ENCODE measurements at regions of chr3 and their contacts with region 1.

Region 1: DNA sequence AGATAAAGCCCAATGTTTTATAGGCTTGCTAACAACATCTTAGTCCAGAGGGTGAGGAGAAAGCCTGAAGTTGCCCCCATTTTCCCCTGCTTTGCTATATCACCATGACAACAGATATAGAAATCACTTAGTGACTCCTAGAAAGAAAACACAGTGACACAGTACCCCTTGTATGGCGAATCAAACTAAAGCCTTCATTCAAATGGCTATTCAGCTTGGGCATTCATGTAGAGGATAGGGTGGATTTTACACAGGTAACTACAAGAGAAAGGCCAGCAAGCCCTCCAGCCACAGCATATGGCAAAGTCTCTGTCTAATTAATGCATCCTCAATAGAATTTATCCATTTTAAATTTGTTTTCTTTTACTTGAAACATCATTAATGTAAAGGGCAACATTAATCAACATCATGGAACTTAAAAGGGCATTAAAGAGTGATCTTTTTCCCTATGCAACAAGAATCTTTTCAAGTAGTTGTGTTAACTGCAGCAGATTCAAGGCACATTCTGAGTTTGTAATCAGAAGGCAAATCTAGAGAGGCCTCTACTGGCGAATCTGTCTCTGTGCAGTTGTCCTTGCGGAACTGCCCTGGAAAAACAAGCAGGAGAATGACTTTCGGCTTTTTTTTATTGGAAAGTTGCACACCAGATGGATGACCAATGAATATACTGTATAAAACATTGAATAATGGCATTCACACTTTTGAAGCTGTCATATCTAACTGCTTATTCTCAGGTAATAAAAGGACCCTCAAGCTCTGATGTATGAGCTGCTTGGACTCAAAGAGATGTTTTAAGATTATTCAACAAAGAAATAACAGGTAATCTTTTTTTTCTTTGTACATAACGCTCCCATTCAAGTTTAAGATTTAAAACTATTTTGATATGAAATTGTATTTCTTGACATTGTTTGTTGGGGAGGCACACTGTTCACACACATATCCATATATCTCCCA is 621.7 kb upstream of the AGTR1 start:
- DNase-seq: no peak
- H3K4me3 ChIP-seq: no peak overlapping the region
- H3K27ac ChIP-seq: no peak overlapping the region
- H3K4me1 ChIP-seq: no peaks in the 10 kb centered on the region
- H3K27me3 ChIP-seq: no peaks in the 10 kb centered on the region
- CTCF ChIP-seq: peak; percentile 53

Region 2: DNA sequence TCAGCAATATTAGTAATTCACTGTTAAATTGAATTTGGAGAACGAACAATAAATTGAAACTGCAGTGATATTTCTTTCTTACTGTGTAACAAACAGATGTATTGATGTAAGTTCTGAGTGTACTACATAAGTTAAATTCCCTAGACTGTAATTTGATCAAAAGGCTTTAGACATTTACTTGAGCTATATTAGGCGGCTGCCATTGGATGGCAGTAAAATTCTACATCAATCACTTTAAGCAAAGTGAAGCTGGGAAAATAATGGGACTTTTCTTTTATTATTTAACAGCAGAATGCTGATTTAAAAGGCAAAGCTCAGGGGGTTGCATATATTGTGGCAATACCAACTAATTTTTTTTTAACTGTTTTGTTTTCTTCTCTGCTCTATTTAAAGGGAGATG is 1258.3 kb before region 1 on chr3:
- CTCF ChIA-PET with region 1: no interaction called
- POLR2A ChIA-PET with region 1: no interaction called
- intact Hi-C with region 1: loop called (anchors 10 kb)
- DNase-seq: no peak
- H3K4me3 ChIP-seq: no peak overlapping the region
- H3K27ac ChIP-seq: no peak overlapping the region
- H3K4me1 ChIP-seq: no peaks in the 10 kb centered on the region
- H3K27me3 ChIP-seq: no peaks in the 10 kb centered on the region
- CTCF ChIP-seq: no peak; the same call in 1 of the 2 replicates

Region 3: GRCh38 chr3:147119989-147120388 is 956.1 kb before region 1 on chr3:
- CTCF ChIA-PET with region 1: interaction called, 4 read pairs
- POLR2A ChIA-PET with region 1: no interaction called
- intact Hi-C with region 1: loop called (anchors 2 kb)
- DNase-seq: no peak
- H3K4me3 ChIP-seq: no peak overlapping the region
- H3K27ac ChIP-seq: no peak overlapping the region
- H3K4me1 ChIP-seq: no peaks in the 10 kb centered on the region
- H3K27me3 ChIP-seq: no peaks in the 10 kb centered on the region
- CTCF ChIP-seq: peak; percentile 57